Right ventricle myocardium superior (tissue), 1 donor: ENCODE measurements at regions of chr12 and their contacts with region 1.

Region 1: DNA sequence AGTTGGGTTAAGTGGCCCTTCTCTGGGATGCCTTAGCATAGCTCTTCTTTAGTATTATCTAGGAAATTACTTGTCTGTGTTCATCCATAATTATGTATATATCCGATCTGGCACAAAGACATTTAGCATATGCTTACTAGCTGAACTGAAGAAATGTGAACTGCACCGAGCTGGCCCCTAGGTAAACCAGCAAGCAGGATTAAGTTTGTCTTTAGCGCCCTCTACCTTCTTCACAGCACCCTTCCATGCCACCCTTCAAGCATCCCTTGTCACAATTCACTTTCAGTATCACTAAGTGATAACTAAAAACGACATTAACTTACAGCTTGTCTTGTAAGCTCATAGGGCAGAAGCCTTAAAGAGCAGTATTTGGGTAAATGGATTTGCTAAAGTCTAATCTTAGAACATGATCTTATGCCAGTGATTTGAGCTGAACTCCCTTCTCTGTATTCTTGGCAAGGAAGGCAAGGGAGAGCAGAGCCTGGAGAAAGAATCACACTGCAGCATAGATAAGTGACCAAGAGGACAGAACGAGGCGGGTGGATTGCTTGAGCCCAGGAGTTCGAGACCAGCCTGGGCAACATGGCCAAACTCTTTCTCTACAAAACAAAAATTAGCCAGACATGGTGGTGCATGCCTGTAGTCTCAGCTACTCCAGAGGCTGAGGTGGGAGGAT is 2.6 kb upstream of the HAL start:
- DNase-seq: no peak
- ATAC-seq: peak; percentile 90

Region 2: DNA sequence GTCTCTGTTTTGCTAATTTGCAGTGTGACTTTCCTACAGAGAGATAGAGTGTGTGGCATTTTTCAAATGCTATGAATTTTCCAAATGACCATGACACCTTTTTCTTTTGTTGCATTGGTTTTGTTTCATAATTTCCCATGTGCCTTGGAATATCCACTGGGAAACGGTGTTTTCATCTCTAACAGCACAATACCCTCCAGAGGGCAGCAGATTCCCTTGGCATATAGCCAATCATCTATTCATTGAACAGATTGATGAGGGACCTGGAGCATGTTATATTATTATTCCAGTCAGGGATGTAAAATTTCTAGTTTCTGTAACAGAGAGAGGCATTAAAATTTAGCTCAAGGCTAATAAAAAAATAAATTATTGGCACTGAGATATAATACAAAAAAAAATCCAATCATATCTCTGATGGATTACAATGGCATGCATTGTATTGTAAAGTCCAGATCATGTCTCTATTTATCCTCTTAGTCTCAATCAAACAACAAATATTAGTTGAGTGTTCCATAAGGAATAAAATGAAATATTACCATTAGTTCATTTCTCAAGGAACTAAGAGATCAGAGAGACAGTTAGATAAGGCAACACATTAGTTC is 178.5 kb before region 1 on chr12:
- intact Hi-C with region 1: loop called (anchors 10 kb)
- DNase-seq: no peak
- ATAC-seq: no peak

Region 3: DNA sequence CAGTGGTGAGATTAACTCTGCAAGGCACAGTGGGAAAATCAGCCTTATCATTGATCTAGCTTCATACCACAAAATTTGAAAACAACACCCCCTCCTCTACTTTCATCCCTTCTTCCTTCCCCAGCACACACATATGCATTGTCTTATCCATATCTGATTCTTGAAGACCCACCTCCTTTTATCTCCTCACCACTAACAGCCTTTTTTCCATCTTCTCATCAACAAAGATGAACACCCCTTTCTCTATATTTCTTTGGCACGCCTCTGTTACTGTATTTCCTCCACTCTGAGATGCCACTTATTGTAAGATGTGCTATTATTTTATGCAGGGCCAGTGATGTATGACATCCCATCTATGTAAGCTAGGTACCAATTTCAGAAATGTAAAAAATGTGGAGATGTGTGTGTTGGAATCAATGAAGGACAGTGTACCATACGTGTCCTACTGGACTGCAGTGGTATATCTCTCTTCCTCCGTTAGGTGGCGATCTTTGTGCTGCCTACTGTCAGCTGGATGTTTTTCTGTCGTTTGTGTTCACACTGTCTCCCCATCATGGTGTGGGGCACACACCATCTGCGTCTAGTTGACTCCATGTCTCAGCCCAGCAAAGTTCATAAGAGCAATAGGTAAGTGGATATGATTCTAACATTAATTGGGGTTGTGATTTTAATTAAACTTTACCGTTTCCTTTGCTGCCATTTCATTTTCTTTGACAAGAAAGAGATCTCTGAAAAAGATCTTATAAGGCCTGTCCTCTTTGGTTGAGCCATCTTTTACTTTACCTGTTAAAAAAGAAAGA is 80.4 kb before region 1 on chr12:
- intact Hi-C with region 1: loop called (anchors 5 kb)
- DNase-seq: no peak
- ATAC-seq: peak; percentile 78

Region 4: GRCh38 chr12:95951515-95951914 is 47.2 kb before region 1 on chr12:
- intact Hi-C with region 1: no loop called
- DNase-seq: no peak
- ATAC-seq: no peak